IMR-90 (cell line): ENCODE measurements at regions of chr2 and their contacts with region 1.

Region 1: DNA sequence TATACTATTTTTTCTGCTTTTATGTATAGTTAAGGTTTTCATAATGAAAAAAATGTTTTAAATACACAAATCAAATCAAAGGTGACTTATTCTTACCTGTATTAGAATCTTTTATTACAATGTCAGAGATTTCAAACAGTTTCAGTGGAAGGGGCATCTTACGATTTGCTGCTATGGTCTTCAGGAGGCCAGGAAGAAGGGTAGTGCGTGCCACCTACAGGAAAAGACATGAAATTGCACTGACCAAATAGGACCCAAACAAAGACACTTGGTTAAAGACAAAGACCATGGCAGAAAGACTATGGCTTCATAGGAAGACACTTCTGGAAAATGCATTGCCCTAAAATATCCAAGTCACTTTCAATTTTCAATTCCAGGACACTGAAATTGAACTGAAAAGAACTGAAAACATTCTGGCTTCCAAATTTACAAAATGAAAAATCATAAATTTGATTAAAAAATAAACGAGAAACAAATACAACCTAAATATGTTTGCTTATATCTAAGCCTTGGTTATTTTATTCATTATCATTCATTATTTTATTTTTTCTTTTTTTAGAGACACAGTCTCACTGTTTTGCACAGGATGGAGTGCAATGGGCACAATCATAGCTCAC is 42.1 kb downstream of the FARSB start:
- DNase-seq: peak; percentile 66
- ATAC-seq: peak; percentile 97
- H3K4me3 ChIP-seq: no peak overlapping the region
- H3K27ac ChIP-seq: no peak overlapping the region
- H3K4me1 ChIP-seq: no peaks in the 10 kb centered on the region
- H3K27me3 ChIP-seq: no peaks in the 10 kb centered on the region
- CTCF ChIP-seq: peak; percentile 79
- POLR2A ChIP-seq: no peak
- RAD21 ChIP-seq: peak; percentile 79

Region 2: DNA sequence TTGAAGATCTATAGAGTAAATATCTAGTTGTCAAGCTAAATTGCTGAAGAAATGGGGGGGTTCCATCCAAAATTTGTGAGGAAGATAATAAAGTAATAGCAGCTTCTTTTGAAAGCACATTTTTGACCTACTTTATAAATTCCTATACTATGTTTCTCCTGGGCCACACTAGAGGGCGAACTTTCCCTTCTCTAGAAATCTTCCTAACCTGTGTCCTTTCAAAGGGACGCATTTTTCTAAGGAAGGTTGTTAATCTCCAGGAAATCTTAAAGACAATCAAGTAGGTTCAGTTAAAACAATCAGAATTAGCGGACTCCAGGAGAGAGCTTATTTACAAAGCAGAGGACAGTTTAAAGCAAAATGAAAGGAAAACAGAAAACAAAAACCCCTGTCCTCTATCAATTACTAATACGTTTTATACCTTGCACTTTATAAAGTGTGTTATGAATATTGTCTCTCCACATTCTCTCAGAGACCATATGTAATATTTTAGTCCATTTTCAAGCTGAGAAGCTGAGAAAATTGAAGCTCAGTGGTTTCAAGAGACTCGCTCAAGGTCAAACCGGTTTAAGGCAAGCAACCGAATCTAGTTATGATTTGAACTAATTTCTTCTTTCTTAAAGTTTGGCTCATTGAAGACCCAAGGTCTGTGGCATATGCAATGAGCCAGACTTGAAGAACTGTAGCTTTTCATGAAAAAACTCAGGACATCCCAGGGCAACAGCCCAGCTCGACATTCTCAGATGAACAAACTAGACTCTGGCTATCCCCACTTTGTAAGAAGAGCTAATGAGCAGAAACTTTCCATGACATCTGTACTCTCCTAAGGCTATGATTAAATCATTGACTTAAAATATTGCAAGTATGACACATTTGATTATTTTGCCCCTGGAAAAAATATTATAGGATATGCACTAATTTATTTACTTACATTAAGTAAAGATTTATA is 588.6 kb before region 1 on chr2:
- CTCF ChIA-PET with region 1: interaction called, 5 read pairs
- POLR2A ChIA-PET with region 1: no interaction called
- dilution Hi-C with region 1: no loop called
- in situ Hi-C with region 1: no loop called
- intact Hi-C with region 1: loop called (anchors 1 kb)
- DNase-seq: peak; percentile 42
- ATAC-seq: peak; percentile 83
- H3K4me3 ChIP-seq: no peak overlapping the region
- H3K27ac ChIP-seq: no peak overlapping the region
- H3K4me1 ChIP-seq: no peaks in the 10 kb centered on the region
- H3K27me3 ChIP-seq: peaks cover 5% of the 10 kb centered on the region
- CTCF ChIP-seq: peak; percentile 61
- POLR2A ChIP-seq: no peak
- RAD21 ChIP-seq: peak; percentile 51

Region 3: DNA sequence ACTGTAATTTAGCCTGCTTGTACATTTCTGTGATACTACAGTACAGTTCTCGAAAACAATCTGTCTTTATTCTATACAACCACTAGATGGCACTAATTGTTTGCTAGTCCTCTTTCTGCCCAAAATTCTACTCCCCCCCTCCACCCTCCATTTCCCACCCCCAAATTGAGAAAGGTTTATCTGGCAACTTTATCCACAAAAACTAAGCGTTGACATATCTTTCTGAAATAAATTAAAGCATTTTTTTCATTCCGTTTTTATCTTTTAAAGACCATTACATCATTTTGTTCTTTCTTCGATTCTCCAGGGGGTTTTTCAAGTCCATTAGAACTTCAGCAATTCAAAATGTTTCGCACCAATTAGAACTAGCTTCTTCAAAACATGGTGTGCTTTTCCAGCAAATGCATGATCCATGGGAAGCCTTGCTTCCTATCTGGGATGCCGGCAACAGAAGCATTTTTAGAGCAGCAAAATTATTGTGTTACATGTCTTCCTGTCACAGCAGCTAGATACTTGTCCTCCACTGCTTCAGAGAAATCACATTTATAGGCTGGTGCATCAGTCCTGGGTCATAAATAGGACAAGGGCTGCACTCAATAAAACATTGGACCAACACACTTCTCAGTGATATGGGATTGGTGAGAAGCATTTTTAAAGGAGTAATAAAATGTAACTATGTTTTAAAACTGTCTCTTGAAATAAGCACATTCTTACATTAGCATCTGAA is 556.3 kb before region 1 on chr2:
- CTCF ChIA-PET with region 1: interaction called, 3 read pairs
- POLR2A ChIA-PET with region 1: no interaction called
- dilution Hi-C with region 1: no loop called
- in situ Hi-C with region 1: no loop called
- intact Hi-C with region 1: loop called (anchors 1 kb)
- DNase-seq: no peak
- ATAC-seq: peak; percentile 54
- H3K4me3 ChIP-seq: no peak overlapping the region
- H3K27ac ChIP-seq: no peak overlapping the region
- H3K4me1 ChIP-seq: no peaks in the 10 kb centered on the region
- H3K27me3 ChIP-seq: peaks cover 9% of the 10 kb centered on the region
- CTCF ChIP-seq: peak; percentile 55
- POLR2A ChIP-seq: no peak
- RAD21 ChIP-seq: peak; percentile 55

Region 4: DNA sequence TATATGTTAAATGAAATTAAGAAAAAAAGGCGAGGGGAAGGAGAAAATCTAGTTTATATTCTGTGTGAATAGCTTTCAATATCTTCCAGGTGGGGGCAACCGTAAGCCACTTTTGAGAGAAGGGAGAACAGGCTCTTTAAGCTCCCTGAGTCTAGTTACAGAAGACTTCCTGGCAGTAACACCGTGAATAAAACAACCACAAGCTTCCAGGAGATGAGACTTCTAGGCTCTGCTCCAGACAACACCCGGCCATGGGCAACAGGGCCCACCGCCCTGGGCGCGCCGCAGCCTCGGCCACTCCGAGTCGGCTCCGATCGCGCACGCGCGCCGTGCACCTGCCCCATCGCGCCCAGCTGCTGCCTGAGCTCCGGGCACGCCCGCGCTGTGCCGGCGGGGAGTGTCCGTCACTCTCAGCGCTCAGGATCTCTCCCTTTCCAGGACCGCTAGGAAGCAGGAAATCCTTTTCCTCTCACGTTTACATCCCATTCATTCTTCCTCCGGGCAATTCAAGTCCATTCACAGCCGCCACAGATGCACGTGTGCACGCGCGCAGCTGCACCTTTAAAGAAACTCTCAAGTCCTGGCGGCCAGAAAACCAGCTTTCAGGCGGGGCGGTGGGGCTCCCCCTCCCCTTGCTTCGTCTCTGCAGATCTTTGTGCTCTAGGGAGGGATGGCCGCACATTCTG is 295.7 kb before region 1 on chr2:
- CTCF ChIA-PET with region 1: interaction called, 3 read pairs
- POLR2A ChIA-PET with region 1: no interaction called
- dilution Hi-C with region 1: no loop called
- in situ Hi-C with region 1: no loop called
- intact Hi-C with region 1: loop called (anchors 1 kb)
- DNase-seq: peak; percentile 52
- ATAC-seq: peak; percentile 56
- H3K4me3 ChIP-seq: peak overlapping the region; percentile 17
- H3K27ac ChIP-seq: no peak overlapping the region
- H3K4me1 ChIP-seq: no peaks in the 10 kb centered on the region; the same call in 1 of the 2 replicates
- H3K27me3 ChIP-seq: peaks cover 49% of the 10 kb centered on the region
- CTCF ChIP-seq: peak; percentile 49
- POLR2A ChIP-seq: no peak
- RAD21 ChIP-seq: peak; percentile 49

Region 5: DNA sequence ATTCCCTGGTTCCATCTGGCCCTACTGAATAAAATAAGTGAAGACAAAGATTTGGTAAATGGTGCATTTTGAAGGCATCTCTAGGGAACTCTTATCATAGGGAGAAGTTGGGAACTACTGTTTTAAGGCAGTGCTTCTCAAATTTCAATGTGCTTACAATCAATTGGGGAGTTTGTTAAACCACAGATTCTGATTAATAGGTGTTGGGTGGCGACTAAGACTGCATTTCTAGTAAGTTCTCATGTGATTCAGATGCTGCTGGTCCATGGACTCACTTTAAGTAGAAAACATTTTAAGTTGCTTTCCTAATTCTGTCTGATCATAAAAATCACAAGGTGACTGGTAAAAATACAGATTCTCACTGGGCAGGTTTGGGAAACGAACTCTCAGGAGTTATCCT is 27.5 kb after region 1 on chr2:
- CTCF ChIA-PET with region 1: no interaction called
- POLR2A ChIA-PET with region 1: no interaction called
- dilution Hi-C with region 1: no loop called
- in situ Hi-C with region 1: no loop called
- intact Hi-C with region 1: loop called (anchors 1 kb)
- DNase-seq: peak; percentile 43
- ATAC-seq: no peak
- H3K4me3 ChIP-seq: no peak overlapping the region
- H3K27ac ChIP-seq: no peak overlapping the region
- H3K4me1 ChIP-seq: 0 out of 2 replicates have a peak, but pooled peaks cover 2% of the 10 kb centered on the region
- H3K27me3 ChIP-seq: no peaks in the 10 kb centered on the region
- CTCF ChIP-seq: no peak
- POLR2A ChIP-seq: no peak
- RAD21 ChIP-seq: no peak

Region 6: DNA sequence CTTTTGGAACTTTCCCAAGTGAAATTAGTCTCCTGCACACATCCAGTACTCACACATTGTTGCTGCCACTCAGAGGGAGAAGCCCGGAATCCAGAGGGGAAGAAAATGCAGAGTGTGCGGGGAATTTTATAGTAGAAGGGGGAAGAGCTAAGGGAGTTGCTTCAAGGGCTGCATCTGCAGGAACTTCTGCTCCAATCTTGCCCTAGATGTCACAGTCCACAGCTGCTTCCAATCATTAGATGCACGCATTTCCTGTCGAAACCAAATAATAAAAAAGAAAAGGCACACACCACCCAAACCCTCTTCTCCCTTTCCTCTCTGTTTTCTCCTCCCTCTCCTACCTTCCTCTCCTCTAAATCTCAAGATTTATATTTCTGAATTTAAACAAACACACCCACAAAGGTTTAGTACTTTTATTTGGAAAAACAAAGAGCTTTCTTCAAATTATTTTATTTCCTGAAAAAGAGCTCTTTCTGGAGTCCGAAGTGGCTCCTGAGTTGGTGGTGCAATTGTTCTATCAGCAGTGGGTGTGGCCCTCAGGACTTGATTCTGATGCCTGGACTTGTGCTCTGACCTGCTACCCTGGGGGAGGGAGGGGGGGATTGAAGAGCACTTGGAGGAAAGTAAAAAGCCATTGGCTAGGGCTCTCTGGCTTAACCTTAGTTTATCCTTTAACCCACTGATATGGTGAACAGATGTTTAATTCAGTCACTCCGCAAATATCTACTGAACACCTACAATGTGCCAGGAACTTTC is 510.2 kb after region 1 on chr2:
- CTCF ChIA-PET with region 1: no interaction called
- POLR2A ChIA-PET with region 1: no interaction called
- dilution Hi-C with region 1: no loop called
- in situ Hi-C with region 1: no loop called
- intact Hi-C with region 1: no loop called
- DNase-seq: peak; percentile 22
- ATAC-seq: 0 out of 2 replicates have a peak, but pooled peaks have one; percentile 14
- H3K4me3 ChIP-seq: no peak overlapping the region
- H3K27ac ChIP-seq: no peak overlapping the region
- H3K4me1 ChIP-seq: no peaks in the 10 kb centered on the region
- H3K27me3 ChIP-seq: no peaks in the 10 kb centered on the region
- CTCF ChIP-seq: no peak
- POLR2A ChIP-seq: no peak
- RAD21 ChIP-seq: no peak